Vagina (tissue), 2 donors: ENCODE measurements at regions of chr1 and their contacts with region 1.

Region 1: GRCh38 chr1:102191723-102192122 is 195.0 kb upstream of the OLFM3 start:
- DNase-seq: no peak
- H3K4me3 ChIP-seq: no peak overlapping the region
- H3K27ac ChIP-seq: no peak overlapping the region
- H3K4me1 ChIP-seq: no peaks in the 10 kb centered on the region
- H3K27me3 ChIP-seq: no peaks in the 10 kb centered on the region
- CTCF ChIP-seq: no peak
- POLR2A ChIP-seq: no peak

Region 2: DNA sequence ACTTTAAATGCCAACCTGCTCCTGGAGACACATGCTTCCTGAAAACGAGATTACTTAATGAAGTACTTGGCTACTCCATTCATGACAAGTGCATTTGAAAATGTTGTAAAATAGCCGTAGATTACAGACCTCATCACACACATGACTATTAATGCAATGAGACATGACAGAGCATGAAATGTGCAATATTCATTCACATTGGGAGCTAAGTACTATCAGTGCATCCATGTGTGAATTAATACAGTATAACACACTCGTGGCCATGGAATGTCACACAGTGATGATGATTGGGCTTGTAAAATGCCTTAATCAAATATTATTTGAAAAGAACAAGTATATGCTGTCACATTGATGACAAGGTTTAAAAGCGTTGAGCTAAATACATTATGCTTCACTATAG is 1965.0 kb after region 1 on chr1:
- intact Hi-C with region 1: loop called (anchors 5 kb)
- DNase-seq: no peak
- H3K4me3 ChIP-seq: no peak overlapping the region
- H3K27ac ChIP-seq: no peak overlapping the region
- H3K4me1 ChIP-seq: no peaks in the 10 kb centered on the region
- H3K27me3 ChIP-seq: no peaks in the 10 kb centered on the region
- CTCF ChIP-seq: no peak
- POLR2A ChIP-seq: no peak